ENCODE measurements at regions of chr10 and their contacts with region 1.

Region 1: GRCh38 chr10:70404036-70404786 is at the start of gene EIF4EBP2:
- DNase-seq: peak; percentile 97
- H3K4me3 Mint-ChIP-seq: peak within 1 kb of the TSS; percentile 98
- H3K27ac Mint-ChIP-seq: peak within 1 kb of the TSS; percentile 96
- H3K4me1 Mint-ChIP-seq: peaks cover 38% of the 10 kb centered on the region
- H3K27me3 Mint-ChIP-seq: no peaks in the 10 kb centered on the region
- total RNA-seq, gene EIF4EBP2: 56.1 to 68.7 TPM

Region 2: GRCh38 chr10:68628576-68629127 is 1775.6 kb before region 1 on chr10:
- CTCF ChIA-PET with region 1: no interaction called
- POLR2A ChIA-PET with region 1: no interaction called
- DNase-seq: peak; percentile 18
- H3K4me3 Mint-ChIP-seq: no peak overlapping the region
- H3K27ac Mint-ChIP-seq: no peak overlapping the region
- H3K4me1 Mint-ChIP-seq: peaks cover 24% of the 10 kb centered on the region
- H3K27me3 Mint-ChIP-seq: no peaks in the 10 kb centered on the region

Region 3: DNA sequence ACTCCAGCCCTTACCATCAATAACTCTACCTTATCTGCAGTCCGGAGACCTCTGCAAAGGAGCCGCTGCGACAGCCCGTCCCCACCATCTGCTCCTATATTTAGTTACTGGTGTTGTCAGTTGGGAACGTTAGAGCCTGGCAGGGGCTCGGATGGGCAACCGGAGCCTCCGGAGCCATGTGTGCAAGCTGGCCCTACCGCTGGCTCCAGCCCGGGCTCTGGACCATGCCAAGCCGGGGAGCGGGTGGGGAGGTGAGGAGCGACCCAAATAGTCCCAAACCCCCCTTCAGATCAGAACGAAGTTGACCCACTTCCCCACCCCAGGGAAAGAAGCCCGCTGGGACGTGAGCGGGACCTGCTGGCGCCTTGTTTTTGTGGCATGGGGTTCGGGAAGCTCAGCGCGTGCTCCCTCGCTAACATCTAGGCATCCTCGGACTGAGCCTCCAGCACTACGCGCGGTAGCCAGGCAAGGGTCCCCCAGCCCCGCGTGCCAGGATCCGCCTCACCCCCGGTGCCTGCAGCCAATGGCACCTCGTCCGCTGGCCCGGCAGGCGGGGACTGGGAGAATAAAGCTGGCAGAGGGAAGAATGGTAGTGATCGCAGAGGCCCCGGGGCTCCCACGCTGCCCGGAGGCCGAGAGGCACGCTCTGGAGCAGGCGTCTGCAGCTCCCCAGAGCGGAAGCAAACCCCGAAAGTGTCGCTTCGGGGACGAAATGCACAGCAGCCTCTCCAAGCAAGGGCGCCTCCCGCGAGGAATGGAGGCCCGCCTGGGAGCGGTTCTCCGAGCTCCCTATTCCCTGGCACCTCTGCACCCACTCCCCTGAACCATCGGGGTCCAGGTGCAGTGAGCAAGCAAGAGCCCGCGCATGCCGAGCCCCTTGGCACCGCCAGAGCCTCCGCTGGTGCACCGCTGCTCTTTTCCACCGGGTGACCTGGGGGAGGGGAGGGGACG is 22.5 kb before region 1 on chr10:
- CTCF ChIA-PET with region 1: interaction called, 20 read pairs
- POLR2A ChIA-PET with region 1: no interaction called
- DNase-seq: peak; percentile 53
- H3K4me3 Mint-ChIP-seq: peak overlapping the region; percentile 84
- H3K27ac Mint-ChIP-seq: peak overlapping the region; percentile 84
- H3K4me1 Mint-ChIP-seq: peaks cover 21% of the 10 kb centered on the region
- H3K27me3 Mint-ChIP-seq: no peaks in the 10 kb centered on the region

Measured in activated CD4-positive, alpha-beta T cell treated with anti-CD3 and anti-CD28 coated beads, Interleukin-2, amount 10 ng/mL, durations not matched to agents 7 days and 5 days (primary cell).